ENCODE measurements at regions of chr9 and their contacts with region 1.

Region 1: DNA sequence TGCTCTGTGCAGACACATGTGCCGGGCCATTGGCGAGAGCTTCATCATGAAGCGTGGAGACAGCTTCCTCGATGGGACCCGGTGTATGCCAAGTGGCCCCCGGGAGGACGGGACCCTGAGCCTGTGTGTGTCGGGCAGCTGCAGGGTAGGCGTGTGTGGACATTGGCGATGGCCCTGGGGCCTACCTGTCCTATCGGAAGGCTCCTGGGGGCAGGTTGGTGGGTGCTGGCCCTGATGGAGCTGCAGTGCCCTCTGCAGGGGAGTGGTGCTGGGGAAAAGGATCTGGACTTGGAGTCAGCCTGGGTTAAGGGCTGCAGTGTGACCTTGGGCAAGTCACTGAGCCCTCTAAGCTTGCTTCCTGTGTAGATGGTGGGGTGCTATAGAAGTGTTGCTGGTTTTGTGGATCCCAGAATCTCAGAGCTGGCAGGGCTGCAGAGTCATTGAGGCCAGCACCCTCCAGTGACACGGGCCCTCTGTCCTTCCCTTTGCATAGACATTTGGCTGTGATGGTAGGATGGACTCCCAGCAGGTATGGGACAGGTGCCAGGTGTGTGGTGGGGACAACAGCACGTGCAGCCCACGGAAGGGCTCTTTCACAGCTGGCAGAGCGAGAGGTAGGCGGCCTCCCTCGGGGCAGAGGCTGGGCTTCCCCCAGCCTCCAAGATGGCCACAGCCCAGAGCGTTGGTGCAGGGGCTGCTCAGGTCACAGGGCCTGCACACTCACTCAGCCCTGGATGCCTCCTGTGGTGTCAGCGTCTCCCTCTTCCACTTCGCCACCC is 15.8 kb downstream of the ADAMTS13 start:
- DNase-seq: peak; percentile 63
- ATAC-seq: peak; percentile 82
- H3K4me3 Mint-ChIP-seq: no peak overlapping the region
- H3K27ac Mint-ChIP-seq: no peak overlapping the region
- H3K4me1 Mint-ChIP-seq: no peaks in the 10 kb centered on the region
- H3K27me3 Mint-ChIP-seq: no peaks in the 10 kb centered on the region
- CTCF ChIP-seq: no peak

Region 2: GRCh38 chr9:133282464-133283238 is 155.3 kb before region 1 on chr9:
- CTCF ChIA-PET with region 1: no interaction called
- POLR2A ChIA-PET with region 1: no interaction called
- DNase-seq: no peak
- ATAC-seq: peak; percentile 26; the same call in 1 of the 2 replicates
- H3K4me3 Mint-ChIP-seq: no peak overlapping the region
- H3K27ac Mint-ChIP-seq: no peak overlapping the region
- H3K4me1 Mint-ChIP-seq: no peaks in the 10 kb centered on the region
- H3K27me3 Mint-ChIP-seq: peaks cover 47% of the 10 kb centered on the region
- CTCF ChIP-seq: no peak

Region 3: GRCh38 chr9:133421615-133422542 is 16.1 kb before region 1 on chr9 and contains the start of gene ADAMTS13:
- CTCF ChIA-PET with region 1: interaction called, 10 read pairs
- POLR2A ChIA-PET with region 1: no interaction called
- DNase-seq: peak; percentile 48
- ATAC-seq: peak; percentile 50
- H3K4me3 Mint-ChIP-seq: no peak within 1 kb of the TSS; the same call in 1 of the 2 replicates
- H3K27ac Mint-ChIP-seq: peak within 1 kb of the TSS; percentile 87
- H3K4me1 Mint-ChIP-seq: peaks cover 32% of the 10 kb centered on the region
- H3K27me3 Mint-ChIP-seq: no peaks in the 10 kb centered on the region
- CTCF ChIP-seq: 0 out of 2 replicates have a peak, but pooled peaks have one; percentile 16
- total RNA-seq, gene ADAMTS13: 12.0 to 16.4 TPM (median 15.9 TPM) in 3 replicates

Region 4: GRCh38 chr9:133470427-133470924 is 32.5 kb after region 1 on chr9:
- CTCF ChIA-PET with region 1: no interaction called
- POLR2A ChIA-PET with region 1: no interaction called
- DNase-seq: peak; percentile 34
- ATAC-seq: peak; percentile 50
- H3K4me3 Mint-ChIP-seq: no peak overlapping the region
- H3K27ac Mint-ChIP-seq: peak overlapping the region; percentile 90
- H3K4me1 Mint-ChIP-seq: 0 out of 2 replicates have a peak, but pooled peaks cover 2% of the 10 kb centered on the region
- H3K27me3 Mint-ChIP-seq: no peaks in the 10 kb centered on the region
- CTCF ChIP-seq: no peak